OCI-LY7 (cell line): ENCODE measurements at regions of chr2 and their contacts with region 1.

Region 1: GRCh38 chr2:96208143-96209010 is at the start of gene STARD7:
- DNase-seq: peak; percentile 99
- H3K4me3 ChIP-seq: peak within 1 kb of the TSS; percentile 90
- H3K27ac ChIP-seq: peak within 1 kb of the TSS; percentile 81
- H3K4me1 ChIP-seq: peaks cover 64% of the 10 kb centered on the region
- CTCF ChIP-seq: peak; percentile 30; the same call in 1 of the 2 replicates
- total RNA-seq, gene STARD7: 208 and 239 TPM in 2 replicates

Region 2: DNA sequence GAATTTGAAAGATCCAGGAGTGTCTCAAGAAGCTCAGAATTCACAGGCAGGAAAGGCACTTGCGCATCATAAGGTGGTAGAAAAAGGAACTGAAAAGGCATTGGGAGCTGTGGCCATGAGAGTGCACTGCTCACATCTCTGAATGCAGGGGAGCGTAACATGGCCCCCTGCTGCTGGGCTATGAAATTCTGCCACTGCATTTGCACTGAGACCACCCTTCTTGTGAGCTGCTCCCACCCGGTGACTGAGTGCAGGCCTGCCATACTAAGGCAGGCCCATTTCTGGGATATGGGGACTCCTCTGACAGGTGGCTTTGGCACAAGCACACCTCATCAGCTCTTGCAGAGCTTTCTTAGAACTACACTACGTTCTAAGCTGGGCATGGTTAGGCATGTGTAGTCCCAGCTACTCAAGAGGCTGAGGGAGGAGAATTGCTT is 25.5 kb after region 1 on chr2:
- CTCF ChIA-PET with region 1: interaction called, 3 read pairs
- POLR2A ChIA-PET with region 1: interaction called, 22 read pairs
- intact Hi-C with region 1: loop called (anchors 2 kb)
- DNase-seq: peak; percentile 84
- H3K4me3 ChIP-seq: peak overlapping the region; percentile 50
- H3K27ac ChIP-seq: peak overlapping the region; percentile 74
- H3K4me1 ChIP-seq: peaks cover 28% of the 10 kb centered on the region
- CTCF ChIP-seq: peak; percentile 74

Region 3: DNA sequence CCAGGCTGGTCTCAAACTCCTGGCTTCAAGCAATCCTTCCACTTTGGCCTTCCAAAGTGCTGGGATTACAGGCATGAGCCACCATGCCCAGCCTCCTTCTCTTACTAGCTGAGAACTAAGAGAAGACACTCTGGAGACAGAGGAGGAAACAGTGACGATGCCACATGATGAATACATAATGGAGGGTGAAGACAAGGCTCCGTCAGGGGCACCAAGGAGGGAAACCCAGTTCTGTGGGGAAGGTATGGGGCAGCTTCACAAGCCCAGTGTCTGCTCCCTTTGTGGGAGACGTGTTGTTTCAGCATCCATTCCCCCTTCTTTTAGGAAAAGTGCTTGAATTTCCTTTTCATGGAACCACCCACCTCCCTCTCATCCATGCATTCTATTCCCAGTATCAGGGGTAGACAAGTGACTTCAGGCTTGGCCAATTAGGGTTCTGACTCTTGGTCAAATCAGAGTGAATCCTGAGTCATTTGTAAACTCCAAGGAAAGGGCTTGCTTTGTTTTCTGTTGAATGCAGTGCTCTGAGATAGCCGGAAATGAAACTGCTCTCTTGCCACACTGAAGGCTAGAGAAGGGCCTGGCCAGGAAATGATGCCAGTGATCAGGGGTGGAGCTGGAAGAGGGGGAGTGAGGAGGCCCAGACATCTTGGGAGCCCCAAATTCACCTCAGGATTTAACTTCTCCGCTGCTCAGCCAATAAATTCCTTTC is 33.7 kb after region 1 on chr2:
- CTCF ChIA-PET with region 1: no interaction called
- POLR2A ChIA-PET with region 1: interaction called, 22 read pairs
- intact Hi-C with region 1: loop called (anchors 1 kb)
- DNase-seq: peak; percentile 79
- H3K4me3 ChIP-seq: peak overlapping the region; percentile 58
- H3K27ac ChIP-seq: peak overlapping the region; percentile 89
- H3K4me1 ChIP-seq: peaks cover 64% of the 10 kb centered on the region
- CTCF ChIP-seq: no peak

Region 4: DNA sequence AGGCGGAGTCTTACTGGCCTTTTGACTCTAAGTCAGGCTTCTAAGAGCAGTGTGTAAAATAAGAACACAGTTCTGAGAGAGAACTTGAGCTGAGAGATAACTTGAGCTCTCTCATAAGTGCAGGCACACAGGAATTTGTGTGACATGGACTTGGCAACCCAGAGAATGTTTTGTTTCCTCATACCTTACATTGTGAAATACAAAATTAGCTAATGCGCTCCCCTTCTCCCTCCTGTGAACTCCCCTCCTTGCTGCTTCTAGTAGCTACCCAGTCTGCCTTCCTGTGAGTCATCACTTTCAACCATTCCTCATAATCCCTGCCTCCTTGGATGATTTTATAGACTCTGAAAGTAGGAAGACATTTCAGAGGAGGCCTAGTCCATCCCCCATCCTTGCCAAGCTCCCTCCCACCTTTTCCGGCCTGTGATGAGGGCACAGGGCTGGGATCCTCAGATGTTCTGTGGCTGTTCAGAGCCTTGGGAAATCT is 456.7 kb after region 1 on chr2:
- CTCF ChIA-PET with region 1: no interaction called
- POLR2A ChIA-PET with region 1: no interaction called
- intact Hi-C with region 1: no loop called
- DNase-seq: no peak
- H3K4me3 ChIP-seq: no peak overlapping the region
- H3K27ac ChIP-seq: no peak overlapping the region
- H3K4me1 ChIP-seq: no peaks in the 10 kb centered on the region
- CTCF ChIP-seq: no peak